B cell (primary cell): ENCODE measurements at regions of chr1 and their contacts with region 1.

Region 1: GRCh38 chr1:155261852-155262673 is at the start of gene SCAMP3:
- DNase-seq: peak; percentile 93
- ATAC-seq: peak; percentile 95
- H3K4me3 ChIP-seq: peak within 1 kb of the TSS; percentile 62 to 96 (median 86)
- H3K4me3 Mint-ChIP-seq: peak within 1 kb of the TSS; percentile 89
- H3K27ac ChIP-seq: peak within 1 kb of the TSS; percentile 50 to 73
- H3K27ac Mint-ChIP-seq: peak within 1 kb of the TSS; percentile 91
- H3K4me1 ChIP-seq: peaks cover 14 to 25% of the 10 kb centered on the region in 2 donors
- H3K4me1 Mint-ChIP-seq: peaks cover 28% of the 10 kb centered on the region
- H3K27me3 ChIP-seq: no peaks in the 10 kb centered on the region
- H3K27me3 Mint-ChIP-seq: no peaks in the 10 kb centered on the region
- CTCF ChIP-seq: no peak
- total RNA-seq, gene SCAMP3: 69.6 and 79.8 TPM in 2 replicates

Region 2: DNA sequence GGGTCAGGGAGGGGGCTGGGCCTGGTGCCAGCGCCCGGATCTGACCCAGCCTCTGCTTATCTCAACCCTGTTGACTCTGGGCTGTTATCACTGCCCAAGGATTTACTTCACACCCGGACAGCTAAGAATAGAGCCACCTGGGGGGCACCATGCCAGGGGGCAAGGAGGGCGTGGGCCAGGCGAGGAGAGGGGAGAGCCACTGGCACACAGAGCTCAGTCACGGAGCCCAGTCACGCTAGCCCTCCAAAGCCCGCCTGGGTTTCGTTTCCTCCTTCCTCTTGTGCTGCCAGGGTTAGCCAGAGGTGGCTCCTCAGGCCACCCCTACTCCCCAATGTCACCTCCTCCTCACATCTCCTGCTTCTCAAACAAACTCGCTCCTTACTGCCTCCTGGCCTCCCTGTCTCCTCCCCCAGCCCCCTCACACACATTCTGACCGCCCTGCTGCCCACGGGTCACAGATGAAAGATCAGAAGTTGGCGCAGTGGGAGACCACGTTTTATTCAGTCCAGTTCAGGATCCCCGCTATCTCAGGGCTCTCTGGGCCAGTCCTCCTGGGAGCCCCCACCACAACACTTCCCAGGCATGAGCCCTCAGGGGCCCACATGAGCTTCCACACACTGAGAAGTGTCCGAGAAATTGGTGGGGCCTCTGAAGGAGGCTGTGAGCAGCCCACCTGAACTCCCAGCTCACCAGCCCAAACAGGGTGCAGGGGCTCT is 76.6 kb before region 1 on chr1:
- CTCF ChIA-PET with region 1: no interaction called
- POLR2A ChIA-PET with region 1: interaction called, 10 read pairs
- intact Hi-C with region 1: no loop called
- DNase-seq: peak; percentile 79
- ATAC-seq: peak; percentile 97
- H3K4me3 ChIP-seq: peak overlapping the region in 1 of 5 experiments; percentile 1
- H3K4me3 Mint-ChIP-seq: peak overlapping the region; percentile 23
- H3K27ac ChIP-seq: peak overlapping the region; percentile 38 to 41
- H3K27ac Mint-ChIP-seq: peak overlapping the region; percentile 86
- H3K4me1 ChIP-seq: peaks cover 18 to 31% of the 10 kb centered on the region in 2 donors
- H3K4me1 Mint-ChIP-seq: peaks cover 28% of the 10 kb centered on the region
- H3K27me3 ChIP-seq: no peaks in the 10 kb centered on the region
- H3K27me3 Mint-ChIP-seq: no peaks in the 10 kb centered on the region
- CTCF ChIP-seq: peak; percentile 24

Region 3: DNA sequence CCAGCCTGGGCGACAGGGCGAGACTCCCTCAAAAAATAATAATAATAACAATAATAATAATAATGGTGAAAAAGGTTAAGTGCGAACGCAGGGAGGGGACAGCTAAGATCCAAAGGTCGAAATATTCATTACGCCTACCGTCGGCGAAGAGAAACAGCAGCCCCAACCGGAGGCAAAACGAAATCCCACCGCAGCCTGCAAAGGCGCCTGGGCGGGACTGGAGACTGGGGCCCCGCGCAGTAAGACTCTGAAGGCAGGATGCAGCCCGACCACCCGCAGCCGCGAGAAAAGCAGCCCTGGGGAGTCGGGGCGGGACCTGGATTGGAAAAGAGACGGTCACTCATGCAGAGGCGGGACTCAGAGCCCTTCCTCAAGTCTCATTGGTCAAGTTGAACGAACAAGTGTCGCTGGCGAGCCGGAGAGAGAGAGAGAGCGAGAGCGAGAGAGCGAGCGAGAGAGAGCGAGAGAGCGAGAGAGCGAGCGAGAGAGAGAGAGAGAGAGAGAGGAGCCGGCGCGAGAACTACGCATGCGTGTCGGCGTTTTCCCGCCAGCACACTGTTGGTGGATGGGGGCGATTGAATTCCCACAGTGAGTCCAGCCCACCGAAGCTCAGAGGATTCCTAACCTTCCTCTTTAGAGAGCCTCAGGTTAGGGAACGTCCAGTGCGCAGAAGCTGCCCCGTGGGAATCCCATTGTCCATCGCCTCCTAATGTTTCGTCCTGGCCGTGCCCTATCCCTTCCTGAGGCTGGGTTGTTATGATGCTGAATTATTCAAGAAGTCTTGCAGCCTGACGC is 17.5 kb before region 1 on chr1:
- CTCF ChIA-PET with region 1: interaction called, 71 read pairs
- POLR2A ChIA-PET with region 1: interaction called, 7 read pairs
- intact Hi-C with region 1: loop called (anchors 1 kb)
- DNase-seq: peak; percentile 95
- ATAC-seq: peak; percentile 97
- H3K4me3 ChIP-seq: peak overlapping the region; percentile 60 to 79 (median 67)
- H3K4me3 Mint-ChIP-seq: peak overlapping the region; percentile 82
- H3K27ac ChIP-seq: peak overlapping the region; percentile 62 to 71
- H3K27ac Mint-ChIP-seq: peak overlapping the region; percentile 96
- H3K4me1 ChIP-seq: peaks cover 27 to 36% of the 10 kb centered on the region in 2 donors
- H3K4me1 Mint-ChIP-seq: peaks cover 33% of the 10 kb centered on the region
- H3K27me3 ChIP-seq: no peaks in the 10 kb centered on the region
- H3K27me3 Mint-ChIP-seq: peaks cover 4% of the 10 kb centered on the region
- CTCF ChIP-seq: peak; percentile 45

Region 4: GRCh38 chr1:155277070-155277895 is 15.2 kb after region 1 on chr1 and contains the start of gene HCN3:
- CTCF ChIA-PET with region 1: interaction called, 4 read pairs
- POLR2A ChIA-PET with region 1: interaction called, 18 read pairs
- intact Hi-C with region 1: loop called (anchors 1 kb)
- DNase-seq: peak; percentile 95
- ATAC-seq: peak; percentile 75
- H3K4me3 ChIP-seq: peak within 1 kb of the TSS; percentile 49 to 64 (median 59)
- H3K4me3 Mint-ChIP-seq: peak within 1 kb of the TSS; percentile 83
- H3K27ac ChIP-seq: peak within 1 kb of the TSS in 1 of 2 donors; percentile 33
- H3K27ac Mint-ChIP-seq: peak within 1 kb of the TSS; percentile 41
- H3K4me1 ChIP-seq: peaks cover 25 to 36% of the 10 kb centered on the region in 2 donors
- H3K4me1 Mint-ChIP-seq: peaks cover 35% of the 10 kb centered on the region
- H3K27me3 ChIP-seq: no peaks in the 10 kb centered on the region
- H3K27me3 Mint-ChIP-seq: no peaks in the 10 kb centered on the region
- CTCF ChIP-seq: peak; percentile 76
- total RNA-seq, gene HCN3: 9.0 and 9.2 TPM in 2 replicates

Region 5: GRCh38 chr1:155562581-155563376 is 300.7 kb after region 1 on chr1 and contains the start of gene ASH1L:
- CTCF ChIA-PET with region 1: no interaction called
- POLR2A ChIA-PET with region 1: no interaction called
- intact Hi-C with region 1: loop called (anchors 5 kb)
- DNase-seq: peak; percentile 98
- ATAC-seq: peak; percentile 76
- H3K4me3 ChIP-seq: peak within 1 kb of the TSS; percentile 83 to 96 (median 92)
- H3K4me3 Mint-ChIP-seq: peak within 1 kb of the TSS; percentile 99
- H3K27ac ChIP-seq: peak within 1 kb of the TSS; percentile 96 to 97
- H3K27ac Mint-ChIP-seq: peak within 1 kb of the TSS; percentile 98
- H3K4me1 ChIP-seq: peaks cover 19 to 27% of the 10 kb centered on the region in 2 donors
- H3K4me1 Mint-ChIP-seq: peaks cover 45% of the 10 kb centered on the region
- H3K27me3 ChIP-seq: no peaks in the 10 kb centered on the region
- H3K27me3 Mint-ChIP-seq: no peaks in the 10 kb centered on the region
- CTCF ChIP-seq: no peak
- total RNA-seq, gene ASH1L: 124 and 128 TPM in 2 replicates

Region 6: GRCh38 chr1:155911156-155912055 is 649.3 kb after region 1 on chr1 and contains the start of gene RIT1:
- CTCF ChIA-PET with region 1: no interaction called
- POLR2A ChIA-PET with region 1: no interaction called
- intact Hi-C with region 1: loop called (anchors 2 kb)
- DNase-seq: peak; percentile 91
- ATAC-seq: peak; percentile 98
- H3K4me3 ChIP-seq: peak within 1 kb of the TSS; percentile 64 to 90 (median 71)
- H3K4me3 Mint-ChIP-seq: peak within 1 kb of the TSS; percentile 96
- H3K27ac ChIP-seq: peak within 1 kb of the TSS; percentile 59 to 79
- H3K27ac Mint-ChIP-seq: peak within 1 kb of the TSS; percentile 97
- H3K4me1 ChIP-seq: peaks cover 14 to 16% of the 10 kb centered on the region in 2 donors
- H3K4me1 Mint-ChIP-seq: peaks cover 23% of the 10 kb centered on the region
- H3K27me3 ChIP-seq: no peaks in the 10 kb centered on the region
- H3K27me3 Mint-ChIP-seq: no peaks in the 10 kb centered on the region
- CTCF ChIP-seq: no peak
- total RNA-seq, gene RIT1: 43.4 and 45.7 TPM in 2 replicates